SK-N-SH (cell line): ENCODE measurements at regions of chr17 and their contacts with region 1.

Region 1: DNA sequence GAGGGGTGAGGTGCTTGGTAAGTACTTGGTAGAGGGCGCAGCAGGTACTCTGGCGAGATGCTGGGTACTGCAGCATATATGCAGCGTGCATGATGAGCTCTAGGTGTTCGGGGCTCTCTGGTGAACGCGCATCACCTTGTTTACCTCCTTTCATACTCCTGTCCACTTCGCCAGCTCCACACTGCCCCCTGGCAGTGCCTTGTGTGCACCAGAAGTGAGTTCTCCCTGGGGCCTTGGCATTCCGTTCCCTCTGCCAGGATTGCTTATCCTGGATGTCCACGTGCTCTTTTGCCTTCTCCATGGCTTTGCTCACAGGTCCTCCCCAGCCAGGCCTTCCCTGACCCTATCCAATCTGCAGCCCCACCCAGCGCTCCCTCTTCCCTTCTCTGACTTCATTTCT is 154.2 kb downstream of the MRM1 start:
- DNase-seq: peak; percentile 68
- H3K4me3 ChIP-seq: no peak overlapping the region
- H3K27ac ChIP-seq: no peak overlapping the region
- H3K4me1 ChIP-seq: no peaks in the 10 kb centered on the region; a peak in 1 of 4 replicates
- H3K27me3 ChIP-seq: no peaks in the 10 kb centered on the region
- CTCF ChIP-seq: peak; percentile 24; the same call in 1 of the 2 replicates
- EP300 ChIP-seq: no peak
- RAD21 ChIP-seq: peak; percentile 75

Region 2: DNA sequence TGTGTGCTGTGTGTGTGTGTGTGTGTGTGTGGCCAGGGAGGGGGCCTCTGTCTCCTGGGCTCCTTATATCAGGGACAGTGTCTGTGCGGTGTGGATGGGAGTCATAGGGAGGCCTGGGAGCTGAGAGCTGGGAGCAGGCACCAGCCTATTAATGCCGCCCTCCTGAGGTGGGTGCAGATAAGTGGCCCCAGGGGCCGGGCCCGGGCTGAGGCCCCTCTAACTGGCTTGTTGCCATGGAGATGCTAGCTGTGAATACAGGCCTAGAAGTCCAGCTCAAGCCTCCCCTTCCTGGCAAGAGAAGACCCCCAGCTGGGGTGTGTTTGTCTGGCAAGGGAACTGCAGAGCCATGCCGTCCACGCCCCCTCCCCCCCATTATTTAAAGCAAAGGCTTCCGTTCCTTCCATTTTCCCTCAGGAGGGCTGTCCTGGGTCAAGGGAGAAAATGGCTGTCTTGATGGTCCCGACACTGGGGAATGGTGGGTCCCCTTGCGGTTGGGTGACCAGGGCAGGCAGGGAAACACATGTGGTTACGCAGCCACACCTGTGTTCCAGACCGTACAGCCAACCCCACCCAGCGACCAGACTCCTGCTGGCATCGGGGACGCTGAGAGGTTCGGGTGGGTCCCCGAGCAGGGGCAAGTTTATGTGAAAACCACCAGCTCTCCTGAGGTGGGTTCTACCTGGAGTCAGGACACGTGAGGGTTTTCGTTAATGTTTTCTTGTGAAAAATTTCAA is 13.2 kb before region 1 on chr17:
- CTCF ChIA-PET with region 1: interaction called, 11 read pairs
- POLR2A ChIA-PET with region 1: no interaction called
- DNase-seq: no peak
- H3K4me3 ChIP-seq: no peak overlapping the region
- H3K27ac ChIP-seq: no peak overlapping the region
- H3K4me1 ChIP-seq: peaks cover 0 to 24% of the 10 kb centered on the region in 2 experiments; a peak in 1 of 4 replicates
- H3K27me3 ChIP-seq: no peaks in the 10 kb centered on the region
- CTCF ChIP-seq: no peak
- EP300 ChIP-seq: no peak
- RAD21 ChIP-seq: no peak

Region 3: DNA sequence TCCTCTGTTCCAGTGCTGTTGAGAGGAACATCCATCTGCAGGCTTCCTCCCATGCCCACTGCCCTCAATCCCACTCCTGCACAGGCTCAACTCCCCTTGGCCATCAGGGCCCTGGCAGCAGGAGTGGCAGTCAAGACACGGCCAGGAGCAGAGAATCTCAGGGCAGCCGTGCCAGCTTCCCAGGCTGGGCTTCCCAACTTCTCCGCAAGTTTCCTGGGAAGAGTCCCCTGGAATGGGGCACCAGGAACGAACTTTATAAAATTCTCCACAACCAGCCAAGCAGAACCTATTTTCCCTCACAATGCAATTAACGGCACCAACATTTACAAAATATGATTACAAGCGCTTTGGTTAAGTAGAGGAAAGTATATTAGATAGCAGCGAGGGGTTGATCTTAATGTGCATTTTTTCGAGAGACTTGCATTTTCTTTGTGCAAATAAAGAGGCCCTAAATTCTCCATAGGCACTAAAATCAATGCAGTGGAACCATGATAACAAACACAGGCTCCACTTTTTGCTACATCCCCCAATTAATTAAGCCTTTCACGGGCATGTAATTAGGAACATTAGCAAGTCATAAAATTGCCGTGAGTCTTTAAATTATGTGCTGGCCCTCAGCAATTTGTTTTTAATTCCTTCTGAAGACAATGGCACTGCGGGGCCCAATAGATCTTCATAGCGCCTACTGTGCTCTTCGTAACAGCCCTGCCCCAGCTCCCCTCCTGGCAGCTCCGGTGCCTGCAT is 81.8 kb after region 1 on chr17:
- CTCF ChIA-PET with region 1: no interaction called
- POLR2A ChIA-PET with region 1: no interaction called
- DNase-seq: no peak
- H3K4me3 ChIP-seq: no peak overlapping the region
- H3K27ac ChIP-seq: no peak overlapping the region
- H3K4me1 ChIP-seq: no peaks in the 10 kb centered on the region
- H3K27me3 ChIP-seq: 0 out of 2 replicates have a peak, but pooled peaks cover 2% of the 10 kb centered on the region
- CTCF ChIP-seq: no peak
- EP300 ChIP-seq: no peak
- RAD21 ChIP-seq: no peak

Region 4: DNA sequence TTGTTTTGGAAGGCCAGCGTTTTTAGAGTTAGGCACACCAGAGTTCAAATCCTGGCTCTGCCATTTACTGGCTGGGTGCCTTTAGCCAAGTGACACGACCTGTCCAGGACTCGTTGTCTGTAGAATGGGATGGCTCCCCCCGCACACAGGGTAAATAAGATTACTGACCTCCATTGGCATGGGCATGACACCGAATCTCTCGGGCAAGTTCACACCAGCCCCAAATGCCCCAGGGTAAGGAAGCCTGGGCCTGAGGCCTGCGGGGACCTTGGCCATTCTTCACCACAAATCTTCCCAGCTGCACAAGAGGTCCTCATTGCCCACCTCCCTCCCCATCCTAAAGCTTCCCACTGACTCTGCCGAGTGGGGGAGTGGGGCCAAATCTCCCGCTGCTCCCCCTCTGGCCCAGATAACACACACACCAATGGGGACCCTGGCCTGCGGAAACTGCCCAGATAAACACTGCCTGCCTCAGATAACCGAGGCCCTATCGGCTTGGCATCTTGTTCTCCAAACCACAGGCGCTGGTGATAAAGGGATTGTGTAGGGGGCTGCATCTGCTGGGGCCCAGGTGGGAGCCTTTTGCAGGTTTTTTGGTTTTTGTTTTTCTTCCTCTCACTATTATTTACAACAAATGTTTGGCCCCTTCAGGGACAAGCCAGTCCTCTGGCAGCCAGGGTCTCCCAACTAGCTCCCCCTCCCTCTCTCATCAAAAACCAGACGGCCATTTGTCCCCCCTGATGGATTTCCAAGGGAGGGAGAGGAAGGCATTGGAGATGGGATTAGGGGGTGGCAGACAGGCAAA is 106.7 kb after region 1 on chr17:
- CTCF ChIA-PET with region 1: no interaction called
- POLR2A ChIA-PET with region 1: no interaction called
- DNase-seq: peak; percentile 62
- H3K4me3 ChIP-seq: no peak overlapping the region
- H3K27ac ChIP-seq: no peak overlapping the region
- H3K4me1 ChIP-seq: peaks cover 0 to 4% of the 10 kb centered on the region in 2 experiments; a peak in 1 of 4 replicates
- H3K27me3 ChIP-seq: no peaks in the 10 kb centered on the region
- CTCF ChIP-seq: no peak
- EP300 ChIP-seq: no peak
- RAD21 ChIP-seq: no peak